ENCODE measurements at regions of chr11 and their contacts with region 1.

Region 1: DNA sequence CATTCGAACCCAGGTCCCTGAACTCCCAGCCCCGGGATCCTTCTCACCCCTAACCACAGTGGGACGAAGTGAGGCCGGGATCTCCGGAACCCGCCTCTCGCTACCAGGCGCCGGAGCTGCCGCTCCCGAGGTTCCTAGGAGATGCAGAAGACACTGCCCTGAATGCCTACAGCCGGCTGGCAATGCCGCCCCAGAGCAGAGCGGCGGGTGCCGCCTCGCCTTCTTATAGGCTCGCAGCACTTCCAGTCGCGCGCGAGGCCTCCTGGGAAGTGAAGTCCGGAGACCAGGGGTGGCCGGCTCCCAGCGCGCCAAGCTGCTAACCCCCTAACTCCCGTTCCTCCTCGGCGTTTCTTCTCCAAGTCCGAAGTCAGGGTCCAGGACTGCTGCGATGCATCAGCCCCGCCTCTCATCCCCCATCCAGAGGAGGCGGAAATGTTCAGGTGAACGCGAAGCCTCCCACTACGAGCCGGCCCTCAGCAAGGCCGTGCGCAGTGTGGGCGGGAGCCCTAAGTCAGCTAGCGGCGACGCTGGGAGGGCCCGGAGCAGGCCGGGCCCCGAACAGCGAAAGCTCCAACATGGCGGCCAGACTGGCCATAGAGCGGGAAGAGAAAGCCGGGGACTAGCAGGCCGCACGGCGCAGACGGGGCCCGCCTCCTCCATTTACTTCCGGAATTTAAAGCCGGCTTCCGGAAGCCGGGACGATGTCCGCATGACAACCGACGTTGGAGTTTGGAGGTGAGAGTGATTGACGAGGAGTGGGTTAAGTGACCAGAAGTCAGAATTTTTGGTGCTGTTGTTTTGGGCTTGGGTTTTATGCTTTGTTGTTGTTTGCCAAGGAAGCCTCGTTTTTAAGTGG is at the starts of genes CYB561A3 and TMEM138:
- DNase-seq: peak; percentile 92
- H3K4me3 Mint-ChIP-seq: peak within 1 kb of the TSS; percentile 93
- H3K27ac Mint-ChIP-seq: peak within 1 kb of the TSS; percentile 94
- H3K4me1 Mint-ChIP-seq: peaks cover 19% of the 10 kb centered on the region
- H3K27me3 Mint-ChIP-seq: no peaks in the 10 kb centered on the region
- CTCF ChIP-seq: no peak
- total RNA-seq, gene CYB561A3: 28.4 and 28.8 TPM in 2 replicates
- total RNA-seq, gene TMEM138: 39.9 and 46.5 TPM in 2 replicates

Region 2: DNA sequence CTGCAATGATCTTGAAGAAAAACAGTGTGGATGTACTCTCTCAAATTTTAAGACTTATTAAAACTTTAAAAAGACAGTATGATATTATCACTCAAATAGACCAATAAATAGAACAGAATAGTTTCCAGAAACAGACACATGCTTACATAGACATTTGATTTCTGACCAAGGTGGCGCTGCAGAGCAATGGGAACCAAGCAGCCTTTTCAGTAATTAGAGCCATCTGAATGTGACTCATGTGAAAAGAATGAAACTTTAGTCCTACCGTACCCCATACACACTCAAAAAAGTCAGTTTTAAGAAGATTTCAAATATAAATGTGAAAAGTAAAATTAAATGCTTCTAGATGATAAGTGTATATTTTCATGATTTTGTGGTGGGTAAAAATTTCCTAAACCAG is 736.7 kb before region 1 on chr11:
- CTCF ChIA-PET with region 1: no interaction called
- POLR2A ChIA-PET with region 1: no interaction called
- intact Hi-C with region 1: no loop called
- DNase-seq: peak; percentile 72
- H3K4me3 Mint-ChIP-seq: no peak overlapping the region
- H3K27ac Mint-ChIP-seq: no peak overlapping the region
- H3K4me1 Mint-ChIP-seq: no peaks in the 10 kb centered on the region
- H3K27me3 Mint-ChIP-seq: peaks cover 11% of the 10 kb centered on the region
- CTCF ChIP-seq: peak; percentile 15

Region 3: DNA sequence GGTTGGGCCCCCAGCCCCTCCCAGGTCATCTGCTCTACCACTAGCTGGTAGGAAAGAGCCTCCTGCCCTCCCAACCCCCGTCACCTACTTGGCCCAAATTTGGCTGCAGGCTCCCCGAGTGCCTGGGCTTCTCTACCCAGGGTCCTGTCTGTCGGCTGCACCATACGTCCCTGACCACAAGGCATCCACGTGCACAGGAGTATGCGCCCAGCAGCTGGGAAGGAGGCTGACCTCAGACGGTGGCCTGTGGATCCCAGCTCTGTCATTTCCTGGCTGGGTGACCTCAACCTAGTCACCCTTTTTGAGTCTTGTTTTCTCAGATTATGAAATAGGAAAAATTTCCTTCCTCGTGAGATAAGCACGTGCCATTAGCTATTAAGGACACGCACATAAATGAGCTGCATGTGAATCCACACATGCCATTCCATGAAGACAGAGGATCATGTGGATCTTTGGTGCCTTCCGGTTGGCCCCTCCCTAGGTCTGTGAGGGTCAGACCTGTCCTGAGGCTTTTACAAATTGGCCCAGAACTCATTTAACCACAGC is 13.9 kb before region 1 on chr11:
- CTCF ChIA-PET with region 1: interaction called, 8 read pairs
- POLR2A ChIA-PET with region 1: interaction called, 72 read pairs
- intact Hi-C with region 1: no loop called
- DNase-seq: no peak
- H3K4me3 Mint-ChIP-seq: no peak overlapping the region
- H3K27ac Mint-ChIP-seq: no peak overlapping the region
- H3K4me1 Mint-ChIP-seq: no peaks in the 10 kb centered on the region
- H3K27me3 Mint-ChIP-seq: no peaks in the 10 kb centered on the region
- CTCF ChIP-seq: no peak

Region 4: DNA sequence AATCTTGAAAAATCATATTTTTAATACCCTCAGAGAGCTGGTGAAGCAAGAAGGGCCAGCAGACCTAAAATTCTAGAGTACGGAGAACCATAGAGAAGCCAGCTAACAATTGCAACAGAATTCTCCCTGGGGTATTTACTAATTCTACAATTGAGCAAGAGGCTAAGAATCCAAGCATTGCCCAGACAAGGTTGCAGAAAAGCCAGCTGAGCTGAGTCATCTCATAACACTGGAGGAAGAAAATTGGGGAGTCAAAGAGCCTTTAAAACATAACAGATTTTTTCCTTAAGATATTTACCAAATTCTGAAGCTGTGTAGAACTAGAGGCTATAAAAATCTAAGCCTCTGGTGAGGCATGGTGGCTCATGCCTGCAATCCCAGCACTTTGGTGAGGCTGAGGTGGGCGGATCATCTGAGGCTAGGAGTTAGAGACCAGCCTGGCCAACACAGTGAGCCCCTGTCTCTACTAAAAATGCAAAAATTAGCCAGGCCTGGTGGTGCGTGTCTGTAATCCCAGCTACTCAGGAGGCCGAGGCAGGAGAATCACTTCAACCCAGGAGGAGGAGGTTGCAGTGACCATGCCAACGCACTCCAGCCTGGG is 16.9 kb after region 1 on chr11:
- CTCF ChIA-PET with region 1: interaction called, 294 read pairs
- POLR2A ChIA-PET with region 1: interaction called, 429 read pairs
- intact Hi-C with region 1: loop called (anchors 1 kb)
- DNase-seq: peak; percentile 94
- H3K4me3 Mint-ChIP-seq: no peak overlapping the region
- H3K27ac Mint-ChIP-seq: peak overlapping the region; percentile 86
- H3K4me1 Mint-ChIP-seq: peaks cover 13% of the 10 kb centered on the region
- H3K27me3 Mint-ChIP-seq: no peaks in the 10 kb centered on the region
- CTCF ChIP-seq: no peak